ENCODE measurements at regions of chr13 and their contacts with region 1.

Region 1: DNA sequence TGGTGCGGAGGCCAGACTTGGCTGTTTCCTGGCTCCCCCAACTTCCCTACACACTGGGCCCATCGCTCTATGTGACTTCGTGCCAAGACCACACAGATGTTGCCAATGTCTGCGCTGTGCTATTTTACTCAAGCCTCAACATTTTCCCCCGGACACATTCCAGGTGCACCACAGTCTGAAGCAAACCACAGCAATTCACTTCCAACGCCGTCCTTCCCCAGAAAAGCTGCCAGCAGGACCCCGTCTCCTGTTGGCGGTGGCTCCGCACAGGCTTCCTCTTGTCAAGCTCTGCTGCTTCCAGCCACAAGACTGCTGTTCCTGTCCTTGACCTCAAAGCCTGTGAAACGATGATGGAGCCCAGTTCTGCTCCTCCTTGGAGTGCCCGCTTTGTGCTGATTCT is 100.7 kb downstream of the CRYL1 start:
- DNase-seq: no peak
- ATAC-seq: no peak
- H3K4me3 ChIP-seq: no peak overlapping the region
- H3K27ac ChIP-seq: no peak overlapping the region
- H3K4me1 ChIP-seq: peaks cover 18% of the 10 kb centered on the region
- H3K27me3 ChIP-seq: no peaks in the 10 kb centered on the region
- CTCF ChIP-seq: no peak

Region 2: GRCh38 chr13:20369886-20370361 is 55.0 kb before region 1 on chr13:
- CTCF ChIA-PET with region 1: no interaction called
- POLR2A ChIA-PET with region 1: interaction called, 10 read pairs
- intact Hi-C with region 1: loop called (anchors 1 kb)
- DNase-seq: peak; percentile 97
- ATAC-seq: peak; percentile 78
- H3K4me3 ChIP-seq: 0 out of 2 replicates have a peak overlapping the region, but pooled peaks have one; percentile 4
- H3K27ac ChIP-seq: peak overlapping the region; percentile 98
- H3K4me1 ChIP-seq: peaks cover 28% of the 10 kb centered on the region
- H3K27me3 ChIP-seq: no peaks in the 10 kb centered on the region
- CTCF ChIP-seq: no peak

Region 3: DNA sequence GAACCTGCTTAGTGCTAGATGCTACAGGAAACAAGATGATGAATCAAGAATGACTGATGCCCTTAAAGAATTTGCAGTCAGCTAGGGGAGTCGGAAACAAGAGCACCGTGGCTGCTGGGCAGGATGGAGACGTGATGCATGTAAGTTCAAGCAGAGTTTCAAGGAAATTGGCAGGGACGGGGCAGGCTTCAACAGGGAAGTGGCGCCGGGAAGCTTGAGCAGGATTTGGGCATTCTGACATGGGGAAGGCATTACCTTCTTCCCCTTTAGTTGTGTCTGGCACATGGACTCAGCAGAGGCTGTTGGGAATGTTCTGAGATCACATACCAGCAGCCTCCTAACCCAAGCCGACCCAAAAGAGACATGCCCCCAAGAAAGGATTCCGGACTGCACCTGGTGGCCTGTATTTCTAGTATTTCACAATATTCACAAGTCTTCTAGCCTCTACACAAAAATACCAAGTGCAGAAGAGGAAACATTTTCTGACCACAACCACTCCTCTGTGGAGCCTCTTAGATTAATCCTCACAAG is 37.4 kb before region 1 on chr13:
- CTCF ChIA-PET with region 1: no interaction called
- POLR2A ChIA-PET with region 1: no interaction called
- intact Hi-C with region 1: loop called (anchors 1 kb)
- DNase-seq: peak; percentile 95
- ATAC-seq: peak; percentile 93
- H3K4me3 ChIP-seq: peak overlapping the region; percentile 11; the same call in 1 of the 2 replicates
- H3K27ac ChIP-seq: peak overlapping the region; percentile 94
- H3K4me1 ChIP-seq: peaks cover 45% of the 10 kb centered on the region
- H3K27me3 ChIP-seq: no peaks in the 10 kb centered on the region
- CTCF ChIP-seq: no peak

Measured in PC-3 (cell line).